ENCODE measurements at regions of chr7 and their contacts with region 1.

Region 1: DNA sequence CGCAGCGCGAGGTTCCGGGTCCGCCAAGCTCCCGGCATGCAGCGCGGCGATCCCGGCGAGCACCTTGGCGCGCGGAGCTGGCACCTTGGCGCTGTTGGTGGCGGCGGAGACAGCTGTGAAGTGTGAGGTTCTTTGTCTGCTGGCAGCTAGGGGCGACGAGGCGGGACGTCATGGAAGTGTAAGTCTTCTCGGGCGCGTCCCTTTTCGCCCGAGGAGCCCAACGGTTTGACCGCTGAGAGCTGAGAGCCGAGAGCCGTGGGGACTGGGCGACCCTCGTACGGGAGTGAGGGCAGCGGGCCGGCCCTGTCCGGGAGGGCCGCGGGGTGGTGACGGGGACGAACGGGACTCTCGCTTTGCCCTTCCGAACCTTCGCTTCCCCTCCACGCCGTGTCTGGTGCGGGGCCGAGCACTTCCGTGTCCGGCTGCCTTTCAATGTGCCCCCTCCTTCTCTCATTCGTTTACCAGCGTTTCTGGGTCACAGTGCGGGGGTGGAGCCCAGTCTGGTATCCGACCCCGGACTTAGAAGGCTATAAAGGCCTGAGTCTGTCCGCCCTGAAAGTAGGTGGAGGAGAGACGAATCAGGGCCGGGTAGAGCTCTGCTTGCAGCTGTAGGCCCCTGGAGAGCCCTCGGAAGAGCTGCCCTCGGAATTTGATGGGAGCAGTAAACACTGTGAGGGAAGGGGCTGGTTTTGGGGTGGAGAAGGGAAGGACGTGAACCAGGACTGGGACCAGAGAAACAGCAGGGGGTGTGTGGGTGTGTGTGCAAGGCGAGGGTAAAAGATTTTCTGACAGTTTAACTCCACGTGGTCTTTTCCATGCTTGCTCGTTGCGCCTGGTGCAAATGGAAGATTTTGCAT is at the start of gene CRCP:
- DNase-seq: peak; percentile 74 to 94 (median 86)
- ATAC-seq: peak; percentile 91
- H3K4me3 ChIP-seq: peak within 1 kb of the TSS; percentile 95 to 97
- H3K4me3 Mint-ChIP-seq: peak within 1 kb of the TSS; percentile 98
- H3K27ac ChIP-seq: peak within 1 kb of the TSS; percentile 93 to 97
- H3K27ac Mint-ChIP-seq: peak within 1 kb of the TSS; percentile 97
- H3K4me1 ChIP-seq: peaks cover 35% of the 10 kb centered on the region
- H3K4me1 Mint-ChIP-seq: peaks cover 50% of the 10 kb centered on the region
- H3K27me3 ChIP-seq: no peaks in the 10 kb centered on the region
- H3K27me3 Mint-ChIP-seq: no peaks in the 10 kb centered on the region
- CTCF ChIP-seq: no peak
- total RNA-seq, gene CRCP: 38.0 to 42.4 TPM

Region 2: DNA sequence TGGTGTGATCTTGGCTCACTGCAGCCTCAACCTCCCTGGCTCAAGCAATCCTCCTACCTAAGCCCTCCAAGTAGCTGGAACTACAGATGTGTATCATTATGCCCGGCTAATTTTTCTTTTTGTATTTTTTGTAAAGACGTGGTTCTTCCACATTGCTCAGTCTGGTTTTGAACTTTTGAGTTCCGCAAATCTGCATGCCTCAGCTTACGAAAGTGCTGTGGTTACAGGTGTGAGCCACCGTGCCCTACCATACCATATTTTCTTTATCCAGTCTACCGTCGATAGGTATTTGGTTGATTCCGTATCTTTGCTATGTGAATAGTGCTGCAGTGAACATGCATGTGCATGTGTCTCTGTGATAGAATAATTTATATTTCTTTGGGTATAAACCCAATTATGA is 1442.6 kb before region 1 on chr7:
- CTCF ChIA-PET with region 1: no interaction called
- POLR2A ChIA-PET with region 1: no interaction called
- intact Hi-C with region 1: loop called in 1 of 2 experiments (anchors 5 kb)
- DNase-seq: no peak
- ATAC-seq: no peak
- H3K4me3 ChIP-seq: no peak overlapping the region
- H3K4me3 Mint-ChIP-seq: peak overlapping the region; percentile 3
- H3K27ac ChIP-seq: no peak overlapping the region
- H3K27ac Mint-ChIP-seq: no peak overlapping the region
- H3K4me1 ChIP-seq: peaks cover 5% of the 10 kb centered on the region
- H3K4me1 Mint-ChIP-seq: peaks cover 79% of the 10 kb centered on the region
- H3K27me3 ChIP-seq: no peaks in the 10 kb centered on the region
- H3K27me3 Mint-ChIP-seq: no peaks in the 10 kb centered on the region
- CTCF ChIP-seq: no peak

Region 3: DNA sequence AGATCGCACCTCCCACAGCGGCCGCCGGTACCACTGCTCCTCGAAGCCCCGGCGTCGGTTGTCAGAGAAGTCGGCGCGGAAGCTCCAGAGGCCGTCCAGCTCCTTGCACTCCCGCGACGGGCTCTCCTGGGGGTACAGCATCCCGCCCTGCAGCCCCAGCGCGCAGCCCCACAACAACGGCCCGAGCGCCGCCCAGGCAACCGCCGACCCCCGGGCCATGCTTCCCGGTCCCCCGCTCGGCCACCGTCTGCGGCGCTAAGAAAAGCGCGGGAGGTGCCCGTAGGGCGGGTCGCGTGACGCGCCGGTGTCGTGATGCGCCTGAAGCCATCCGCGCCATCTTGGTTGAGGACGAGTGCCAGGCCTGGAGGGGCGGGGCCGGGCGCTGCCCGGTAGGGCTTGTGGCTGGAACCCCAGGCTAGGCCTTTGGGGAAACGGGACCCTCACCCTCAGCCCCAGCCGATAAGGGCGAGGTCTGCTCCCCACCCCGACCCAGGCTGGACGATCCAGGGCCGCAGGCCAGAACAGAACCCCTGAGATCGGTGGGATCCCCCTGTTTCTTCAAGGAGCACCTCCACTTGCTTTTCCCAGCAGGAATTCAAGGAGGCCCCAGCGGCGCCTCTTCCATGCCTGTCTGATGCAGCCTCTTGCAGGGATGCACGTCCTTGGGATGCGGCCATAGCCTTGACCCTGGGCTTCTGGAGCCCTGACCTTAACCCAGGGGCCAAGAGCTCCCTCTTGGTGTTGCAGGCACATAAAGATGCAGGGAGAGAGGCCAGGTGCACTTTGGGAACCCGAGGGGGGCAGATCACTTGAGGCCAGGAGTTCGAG is 132.8 kb before region 1 on chr7 and contains the start of gene GUSB:
- CTCF ChIA-PET with region 1: no interaction called
- POLR2A ChIA-PET with region 1: no interaction called
- intact Hi-C with region 1: loop called (anchors 1 kb)
- DNase-seq: peak; percentile 80 to 93 (median 90)
- ATAC-seq: peak; percentile 87
- H3K4me3 ChIP-seq: peak within 1 kb of the TSS; percentile 83 to 90
- H3K4me3 Mint-ChIP-seq: peak within 1 kb of the TSS; percentile 85
- H3K27ac ChIP-seq: peak within 1 kb of the TSS; percentile 69 to 73
- H3K27ac Mint-ChIP-seq: peak within 1 kb of the TSS; percentile 88
- H3K4me1 ChIP-seq: peaks cover 18% of the 10 kb centered on the region
- H3K4me1 Mint-ChIP-seq: peaks cover 14% of the 10 kb centered on the region
- H3K27me3 ChIP-seq: no peaks in the 10 kb centered on the region
- H3K27me3 Mint-ChIP-seq: no peaks in the 10 kb centered on the region
- CTCF ChIP-seq: no peak
- total RNA-seq, gene GUSB: 37.0 to 41.8 TPM

Region 4: GRCh38 chr7:66204822-66205740 is 90.1 kb after region 1 on chr7 and contains the start of gene TPST1:
- CTCF ChIA-PET with region 1: no interaction called
- POLR2A ChIA-PET with region 1: interaction called, 4 read pairs
- intact Hi-C with region 1: loop called (anchors 1 to 5 kb)
- DNase-seq: peak; percentile 61 to 90 (median 75)
- ATAC-seq: peak; percentile 89
- H3K4me3 ChIP-seq: peak within 1 kb of the TSS; percentile 59 to 84
- H3K4me3 Mint-ChIP-seq: peak within 1 kb of the TSS; percentile 89
- H3K27ac ChIP-seq: peak within 1 kb of the TSS in 1 of 2 experiments; percentile 54
- H3K27ac Mint-ChIP-seq: peak within 1 kb of the TSS; percentile 66
- H3K4me1 ChIP-seq: peaks cover 35% of the 10 kb centered on the region
- H3K4me1 Mint-ChIP-seq: peaks cover 42% of the 10 kb centered on the region
- H3K27me3 ChIP-seq: peaks cover 0 to 3% of the 10 kb centered on the region in 2 experiments
- H3K27me3 Mint-ChIP-seq: peaks cover 6% of the 10 kb centered on the region
- CTCF ChIP-seq: peak; percentile 48
- total RNA-seq, gene TPST1: 4.3 to 6.6 TPM

Region 5: DNA sequence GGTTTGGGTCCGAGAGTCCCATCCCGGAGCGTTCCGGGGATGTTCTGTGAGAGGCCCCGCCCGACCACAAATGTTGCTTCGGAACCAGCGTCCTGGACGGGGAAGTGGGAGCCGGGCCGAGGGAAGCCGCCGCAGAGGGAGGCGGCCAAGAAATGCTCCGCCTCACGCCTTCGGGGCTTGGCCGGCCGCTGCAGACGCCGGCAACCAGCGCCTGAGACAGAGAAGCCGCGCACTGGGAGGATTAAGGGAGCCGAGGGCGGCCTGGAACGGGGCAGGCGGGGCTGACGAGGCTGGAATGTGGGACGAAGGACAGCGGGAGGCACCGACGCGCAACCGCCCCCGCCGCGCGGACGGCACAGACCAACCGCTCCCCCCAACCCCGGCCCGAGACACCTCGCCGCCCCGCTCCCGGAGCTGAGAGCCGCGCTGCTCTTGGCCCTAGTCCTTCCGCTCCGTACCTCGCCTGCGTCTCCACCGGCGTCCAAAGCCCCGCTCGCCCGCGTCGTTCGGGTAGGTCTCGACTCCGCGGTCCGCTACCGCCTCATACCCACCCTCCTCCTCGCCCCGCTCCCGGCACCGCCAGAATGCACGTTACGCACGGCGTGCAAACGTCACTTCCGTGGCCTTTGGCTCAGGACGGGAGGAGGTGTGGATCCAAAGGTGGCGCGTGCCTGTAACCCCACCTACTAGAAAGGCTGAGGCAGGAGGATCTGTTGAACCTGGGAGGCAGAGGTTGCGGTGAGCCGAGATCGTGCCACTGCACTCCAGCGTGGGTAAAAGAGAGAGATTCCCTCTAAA is 477.0 kb after region 1 on chr7:
- CTCF ChIA-PET with region 1: no interaction called
- POLR2A ChIA-PET with region 1: no interaction called
- intact Hi-C with region 1: loop called in 1 of 2 experiments (anchors 5 kb)
- DNase-seq: peak; percentile 69 to 95 (median 91)
- ATAC-seq: peak; percentile 98
- H3K4me3 ChIP-seq: peak overlapping the region; percentile 73 to 95
- H3K4me3 Mint-ChIP-seq: peak overlapping the region; percentile 99
- H3K27ac ChIP-seq: peak overlapping the region; percentile 67 to 89
- H3K27ac Mint-ChIP-seq: peak overlapping the region; percentile 98
- H3K4me1 ChIP-seq: peaks cover 37% of the 10 kb centered on the region
- H3K4me1 Mint-ChIP-seq: peaks cover 49% of the 10 kb centered on the region
- H3K27me3 ChIP-seq: no peaks in the 10 kb centered on the region
- H3K27me3 Mint-ChIP-seq: no peaks in the 10 kb centered on the region
- CTCF ChIP-seq: no peak

Measured in CD8-positive, alpha-beta T cell (primary cell).